ENCODE measurements at regions of chr2 and their contacts with region 1.

Region 1: DNA sequence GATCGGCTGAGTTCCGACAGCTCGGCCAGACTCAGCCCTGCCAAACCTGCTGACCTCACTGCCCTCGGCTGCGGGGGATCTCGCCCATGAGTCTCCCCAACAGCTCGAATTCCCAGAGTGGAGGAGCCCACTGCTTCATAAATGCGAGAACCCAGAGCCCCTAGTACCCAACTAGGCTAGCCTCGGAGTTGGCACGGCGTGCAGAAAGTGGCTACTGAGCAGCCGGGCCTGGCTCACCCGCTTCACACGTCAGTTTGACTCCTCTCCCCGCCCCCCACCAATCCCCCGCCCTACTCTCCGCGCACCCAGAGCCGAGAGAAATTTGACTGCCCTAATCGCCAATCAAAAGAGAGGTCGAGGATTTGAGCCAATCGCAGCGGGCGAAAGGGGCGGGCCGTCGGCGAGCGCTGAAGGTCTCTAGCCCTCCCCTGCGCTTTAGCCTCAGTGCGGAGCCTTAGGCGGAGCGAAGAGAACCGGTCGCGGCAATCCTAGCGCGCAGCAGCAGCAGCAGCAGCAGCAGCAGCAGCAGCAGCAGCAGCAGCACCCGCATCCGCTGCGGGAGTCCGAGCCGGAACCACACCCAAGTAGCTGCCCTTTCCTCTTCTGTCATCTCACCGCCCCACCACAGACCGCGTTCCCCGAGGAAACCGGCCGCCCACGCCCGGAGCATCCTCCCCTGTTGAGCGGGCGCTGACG is at the start of gene GLS:
- DNase-seq: peak; percentile 97
- ATAC-seq: peak; percentile 81
- H3K4me3 Mint-ChIP-seq: peak within 1 kb of the TSS; percentile 94
- H3K27ac Mint-ChIP-seq: peak within 1 kb of the TSS; percentile 99
- H3K4me1 Mint-ChIP-seq: peaks cover 36% of the 10 kb centered on the region
- H3K27me3 Mint-ChIP-seq: no peaks in the 10 kb centered on the region
- CTCF ChIP-seq: no peak
- total RNA-seq, gene GLS: 218 to 227 TPM

Region 2: DNA sequence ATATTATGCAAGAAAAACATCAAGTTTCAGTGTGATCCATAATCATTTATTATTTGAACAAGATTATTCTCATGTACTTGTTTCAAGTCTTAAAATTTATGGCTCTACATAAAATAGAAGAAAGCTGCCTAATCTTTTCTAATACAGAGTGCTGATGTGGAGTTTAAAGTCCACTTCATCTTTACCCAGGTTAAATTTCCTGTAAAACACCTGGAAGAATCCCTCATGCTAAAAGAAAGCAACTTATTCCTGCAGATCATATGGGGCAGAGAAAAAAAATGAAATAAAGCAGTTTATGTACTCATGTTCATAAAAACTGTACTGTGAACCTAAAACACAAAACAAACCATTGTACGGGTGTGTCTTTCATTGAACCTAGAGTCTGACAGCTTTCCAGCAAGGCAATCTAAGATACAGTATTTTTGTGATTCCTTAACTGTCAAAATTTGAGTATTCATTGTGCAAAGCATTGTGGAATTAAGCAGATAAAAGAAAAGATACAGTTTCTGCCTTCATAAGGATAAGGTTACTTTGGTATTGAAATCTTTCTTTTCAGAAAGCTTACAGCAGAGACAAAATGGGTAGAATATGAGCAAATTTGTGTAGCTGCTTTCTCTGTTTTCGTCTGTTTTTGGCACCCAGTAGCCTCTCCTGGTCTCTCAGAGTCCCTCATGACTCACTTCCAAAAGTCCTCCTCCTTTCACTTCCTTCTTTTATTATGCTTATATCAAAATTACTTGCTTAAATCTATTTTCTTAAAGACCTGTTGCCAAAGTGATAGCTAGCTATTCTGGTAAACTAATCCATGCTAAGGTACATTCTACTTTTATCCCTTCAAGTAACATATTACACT is 26.8 kb before region 1 on chr2:
- CTCF ChIA-PET with region 1: interaction called, 21 read pairs
- POLR2A ChIA-PET with region 1: interaction called, 18 read pairs
- intact Hi-C with region 1: no loop called
- DNase-seq: no peak
- ATAC-seq: no peak
- H3K4me3 Mint-ChIP-seq: no peak overlapping the region
- H3K27ac Mint-ChIP-seq: no peak overlapping the region
- H3K4me1 Mint-ChIP-seq: peaks cover 8% of the 10 kb centered on the region
- H3K27me3 Mint-ChIP-seq: no peaks in the 10 kb centered on the region
- CTCF ChIP-seq: no peak

Region 3: DNA sequence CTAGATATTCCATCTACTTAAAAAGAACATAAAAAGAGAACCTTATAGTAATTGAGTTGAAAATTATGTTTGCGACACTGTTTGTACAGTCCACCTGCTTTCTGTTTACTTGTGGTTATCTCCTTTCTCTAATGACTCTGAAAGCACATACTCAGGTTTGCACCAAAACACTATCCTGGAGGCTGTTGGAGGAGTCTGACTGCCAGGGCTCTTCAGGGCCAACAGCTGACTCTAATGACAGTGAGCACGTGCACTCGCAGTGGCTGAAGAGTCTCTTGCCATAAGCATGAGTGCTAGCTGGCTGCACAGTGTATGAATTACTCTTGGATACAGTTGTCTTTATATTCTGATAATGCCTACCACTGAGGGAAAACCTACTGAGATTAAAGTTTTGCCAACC is 16.6 kb before region 1 on chr2:
- CTCF ChIA-PET with region 1: interaction called, 5 read pairs
- POLR2A ChIA-PET with region 1: interaction called, 27 read pairs
- intact Hi-C with region 1: no loop called
- DNase-seq: no peak
- ATAC-seq: no peak
- H3K4me3 Mint-ChIP-seq: no peak overlapping the region
- H3K27ac Mint-ChIP-seq: no peak overlapping the region
- H3K4me1 Mint-ChIP-seq: peaks cover 24% of the 10 kb centered on the region
- H3K27me3 Mint-ChIP-seq: no peaks in the 10 kb centered on the region
- CTCF ChIP-seq: no peak

Region 4: DNA sequence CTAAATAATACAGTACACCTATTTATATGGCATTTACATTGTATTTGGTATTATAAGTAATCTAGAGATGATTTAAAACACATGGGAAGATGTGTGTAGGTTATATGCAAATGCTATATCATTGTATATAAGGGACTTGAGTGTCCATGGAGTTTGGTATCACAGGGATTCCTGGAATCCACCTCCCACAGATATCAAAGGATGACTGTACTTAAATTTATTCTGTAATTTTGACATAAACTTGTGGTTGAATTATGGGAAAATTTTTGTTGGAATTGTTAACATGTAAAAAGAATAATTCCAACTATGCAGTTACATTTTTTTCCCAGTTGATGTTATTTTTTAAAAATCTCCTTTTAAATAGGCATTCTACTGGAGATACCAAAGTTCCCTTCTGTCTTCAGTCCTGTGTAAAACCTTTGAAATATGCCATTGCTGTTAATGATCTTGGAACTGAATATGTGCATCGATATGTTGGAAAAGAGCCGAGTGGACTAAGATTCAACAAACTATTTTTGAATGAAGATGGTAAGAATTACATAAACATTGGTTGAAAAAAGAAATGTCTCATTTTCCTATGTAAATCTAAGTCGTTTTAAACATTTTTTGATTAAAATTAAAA is 24.2 kb after region 1 on chr2:
- CTCF ChIA-PET with region 1: interaction called, 3 read pairs
- POLR2A ChIA-PET with region 1: interaction called, 19 read pairs
- intact Hi-C with region 1: no loop called
- DNase-seq: no peak
- ATAC-seq: no peak
- H3K4me3 Mint-ChIP-seq: no peak overlapping the region
- H3K27ac Mint-ChIP-seq: peak overlapping the region; percentile 66
- H3K4me1 Mint-ChIP-seq: peaks cover 44% of the 10 kb centered on the region
- H3K27me3 Mint-ChIP-seq: no peaks in the 10 kb centered on the region
- CTCF ChIP-seq: no peak

Region 5: GRCh38 chr2:190947711-190948251 is 67.3 kb after region 1 on chr2:
- CTCF ChIA-PET with region 1: interaction called, 8 read pairs
- POLR2A ChIA-PET with region 1: interaction called, 16 read pairs
- intact Hi-C with region 1: no loop called
- DNase-seq: peak; percentile 36
- ATAC-seq: peak; percentile 81
- H3K4me3 Mint-ChIP-seq: no peak overlapping the region
- H3K27ac Mint-ChIP-seq: peak overlapping the region; percentile 70
- H3K4me1 Mint-ChIP-seq: peaks cover 22% of the 10 kb centered on the region
- H3K27me3 Mint-ChIP-seq: no peaks in the 10 kb centered on the region
- CTCF ChIP-seq: no peak

Region 6: GRCh38 chr2:191020221-191020741 is 139.8 kb after region 1 on chr2:
- CTCF ChIA-PET with region 1: no interaction called
- POLR2A ChIA-PET with region 1: interaction called, 32 read pairs
- intact Hi-C with region 1: no loop called
- DNase-seq: peak; percentile 95
- ATAC-seq: peak; percentile 64
- H3K4me3 Mint-ChIP-seq: no peak overlapping the region
- H3K27ac Mint-ChIP-seq: no peak overlapping the region
- H3K4me1 Mint-ChIP-seq: peaks cover 33% of the 10 kb centered on the region
- H3K27me3 Mint-ChIP-seq: no peaks in the 10 kb centered on the region
- CTCF ChIP-seq: no peak

Region 7: DNA sequence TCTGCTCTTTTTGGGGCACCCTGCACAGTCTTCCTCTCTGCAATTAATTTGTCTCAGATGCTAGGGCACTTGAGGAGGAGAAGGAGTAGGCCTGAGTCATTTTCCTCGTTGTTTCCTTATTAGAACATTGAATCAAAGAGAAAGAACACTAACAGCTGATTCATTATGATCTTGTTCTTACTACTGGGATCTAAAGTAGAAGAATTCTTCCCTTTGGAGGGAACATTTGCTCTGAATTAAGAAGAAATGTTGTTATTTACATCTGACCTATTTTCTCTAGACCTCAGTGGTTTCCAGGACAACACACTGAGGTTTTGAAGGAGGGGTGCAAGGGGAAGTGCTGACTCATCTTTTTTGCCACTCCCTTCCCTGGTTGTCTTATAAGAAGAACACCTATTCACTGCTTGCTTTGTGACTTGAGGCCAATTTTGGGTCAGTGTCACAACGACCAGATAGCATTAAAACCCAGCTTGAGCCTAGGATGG is 157.8 kb after region 1 on chr2:
- CTCF ChIA-PET with region 1: no interaction called
- POLR2A ChIA-PET with region 1: no interaction called
- intact Hi-C with region 1: no loop called
- DNase-seq: peak; percentile 41
- ATAC-seq: peak; percentile 67
- H3K4me3 Mint-ChIP-seq: no peak overlapping the region
- H3K27ac Mint-ChIP-seq: peak overlapping the region; percentile 76
- H3K4me1 Mint-ChIP-seq: peaks cover 29% of the 10 kb centered on the region
- H3K27me3 Mint-ChIP-seq: no peaks in the 10 kb centered on the region
- CTCF ChIP-seq: no peak

Region 8: GRCh38 chr2:191051825-191052778 is 171.6 kb after region 1 on chr2:
- CTCF ChIA-PET with region 1: no interaction called
- POLR2A ChIA-PET with region 1: no interaction called
- intact Hi-C with region 1: no loop called
- DNase-seq: no peak
- ATAC-seq: peak; percentile 72
- H3K4me3 Mint-ChIP-seq: no peak overlapping the region
- H3K27ac Mint-ChIP-seq: no peak overlapping the region
- H3K4me1 Mint-ChIP-seq: peaks cover 21% of the 10 kb centered on the region
- H3K27me3 Mint-ChIP-seq: no peaks in the 10 kb centered on the region
- CTCF ChIP-seq: peak; percentile 94

Measured in activated CD8-positive, alpha-beta T cell treated with anti-CD3 and anti-CD28 coated beads for 36 hours (primary cell).